Endothelial cell of umbilical vein (primary cell): ENCODE measurements at regions of chr3 and their contacts with region 1.

Region 1: GRCh38 chr3:46423588-46423987 is 16.5 kb downstream of the CCRL2 start:
- DNase-seq: no peak
- H3K4me3 ChIP-seq: no peak overlapping the region
- H3K27ac ChIP-seq: no peak overlapping the region
- H3K4me1 ChIP-seq: no peaks in the 10 kb centered on the region
- H3K27me3 ChIP-seq: peaks cover 0 to 2% of the 10 kb centered on the region in 2 experiments
- CTCF ChIP-seq: no peak
- POLR2A ChIP-seq: no peak

Region 2: GRCh38 chr3:45938864-45939263 is 484.7 kb before region 1 on chr3:
- CTCF ChIA-PET with region 1: interaction called, 19 read pairs
- POLR2A ChIA-PET with region 1: no interaction called
- dilution Hi-C with region 1: no loop called
- intact Hi-C with region 1: loop called (anchors 1 kb)
- DNase-seq: peak; percentile 86
- H3K4me3 ChIP-seq: no peak overlapping the region
- H3K27ac ChIP-seq: no peak overlapping the region
- H3K4me1 ChIP-seq: no peaks in the 10 kb centered on the region
- H3K27me3 ChIP-seq: no peaks in the 10 kb centered on the region
- CTCF ChIP-seq: peak; percentile 90 to 93
- POLR2A ChIP-seq: no peak

Region 3: GRCh38 chr3:46214751-46215352 is 208.7 kb before region 1 on chr3:
- CTCF ChIA-PET with region 1: interaction called, 9 read pairs
- POLR2A ChIA-PET with region 1: no interaction called
- dilution Hi-C with region 1: no loop called
- intact Hi-C with region 1: loop called (anchors 10 kb)
- DNase-seq: no peak
- H3K4me3 ChIP-seq: no peak overlapping the region
- H3K27ac ChIP-seq: no peak overlapping the region
- H3K4me1 ChIP-seq: no peaks in the 10 kb centered on the region
- H3K27me3 ChIP-seq: no peaks in the 10 kb centered on the region
- CTCF ChIP-seq: peak in 1 of 2 donors; percentile 15
- POLR2A ChIP-seq: no peak

Region 4: DNA sequence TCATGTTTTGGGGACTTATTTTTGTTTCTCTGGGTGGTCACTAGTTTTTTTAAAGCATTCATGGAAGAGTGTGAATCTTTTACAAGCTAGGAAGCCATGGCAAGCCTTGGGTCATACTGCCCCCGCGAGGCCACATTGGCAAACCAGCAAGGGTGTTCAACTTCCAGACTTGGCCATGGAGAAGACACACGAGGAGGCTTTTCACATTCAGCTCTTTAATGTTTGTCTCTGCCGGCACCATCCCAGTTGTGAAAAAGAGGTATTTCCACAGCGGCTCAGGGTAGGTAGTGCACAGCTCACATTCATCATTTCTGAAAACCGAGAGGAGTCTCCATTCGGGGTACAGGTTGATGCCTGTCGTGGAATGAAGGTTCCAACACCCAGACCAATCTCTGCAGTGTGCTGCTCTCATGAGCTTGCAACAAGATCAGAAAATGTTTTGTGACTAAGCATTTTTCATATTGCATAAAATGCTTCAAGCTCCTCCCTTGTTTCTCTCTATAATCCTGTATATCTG is 45.1 kb before region 1 on chr3:
- CTCF ChIA-PET with region 1: interaction called, 39 read pairs
- POLR2A ChIA-PET with region 1: no interaction called
- dilution Hi-C with region 1: no loop called
- intact Hi-C with region 1: loop called (anchors 2 kb)
- DNase-seq: peak; percentile 56
- H3K4me3 ChIP-seq: no peak overlapping the region
- H3K27ac ChIP-seq: no peak overlapping the region
- H3K4me1 ChIP-seq: no peaks in the 10 kb centered on the region
- H3K27me3 ChIP-seq: peaks cover 8 to 13% of the 10 kb centered on the region in 2 experiments
- CTCF ChIP-seq: peak; percentile 76 to 82
- POLR2A ChIP-seq: no peak

Region 5: GRCh38 chr3:46406788-46407611 is 16.6 kb before region 1 on chr3 and contains the starts of genes CCR5AS and CCRL2:
- CTCF ChIA-PET with region 1: interaction called, 50 read pairs
- POLR2A ChIA-PET with region 1: no interaction called
- dilution Hi-C with region 1: no loop called
- intact Hi-C with region 1: no loop called
- DNase-seq: peak; percentile 86
- H3K4me3 ChIP-seq: peak within 1 kb of the TSS; percentile 19 to 67 (median 23)
- H3K27ac ChIP-seq: peak within 1 kb of the TSS; percentile 63
- H3K4me1 ChIP-seq: peaks cover 41% of the 10 kb centered on the region
- H3K27me3 ChIP-seq: no peaks in the 10 kb centered on the region
- CTCF ChIP-seq: no peak
- POLR2A ChIP-seq: peak; percentile 35
- total RNA-seq, gene CCRL2: 3.9 and 6.4 TPM in 2 replicates

Region 6: DNA sequence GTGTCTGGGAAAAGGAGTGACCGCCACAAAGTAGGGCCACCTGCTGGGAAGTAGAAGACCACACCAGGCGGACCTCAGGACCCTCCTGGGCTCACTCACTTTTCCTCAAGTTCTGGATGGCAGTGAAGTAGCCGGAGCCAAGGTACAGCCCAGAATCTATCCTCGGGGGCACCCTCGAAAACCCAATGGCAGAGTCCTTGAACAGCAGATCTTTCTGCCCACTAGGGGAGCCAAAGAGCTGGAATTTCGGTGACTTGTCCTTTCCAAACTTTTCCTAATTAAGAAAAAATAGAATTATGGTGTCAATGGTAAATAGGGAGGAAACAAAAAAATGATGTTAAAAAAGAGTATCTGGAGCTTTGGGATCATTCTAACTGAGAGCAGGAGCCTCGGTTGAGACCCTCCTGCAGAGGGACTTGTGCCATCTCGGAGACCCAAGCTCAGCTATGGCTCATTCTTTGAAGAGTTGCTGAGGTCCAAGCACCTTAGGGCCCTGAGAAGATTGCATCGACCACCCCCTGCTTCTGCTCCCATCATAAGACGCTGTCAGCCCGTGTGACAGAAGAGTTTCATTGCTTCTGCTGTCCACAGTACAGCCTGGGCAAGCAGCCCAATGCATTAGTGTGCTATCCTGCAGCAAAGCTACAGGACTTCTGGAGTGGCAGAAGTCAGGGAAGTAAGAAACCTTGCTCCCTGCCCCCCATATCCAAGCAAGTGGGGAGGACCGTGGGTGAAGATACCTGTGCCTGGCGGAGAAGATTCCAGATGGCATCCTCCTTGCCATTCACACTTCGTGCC is 26.4 kb after region 1 on chr3:
- CTCF ChIA-PET with region 1: interaction called, 12 read pairs
- POLR2A ChIA-PET with region 1: no interaction called
- dilution Hi-C with region 1: no loop called
- intact Hi-C with region 1: no loop called
- DNase-seq: no peak
- H3K4me3 ChIP-seq: no peak overlapping the region
- H3K27ac ChIP-seq: no peak overlapping the region
- H3K4me1 ChIP-seq: no peaks in the 10 kb centered on the region
- H3K27me3 ChIP-seq: peaks cover 0 to 8% of the 10 kb centered on the region in 2 experiments
- CTCF ChIP-seq: peak; percentile 62 to 65
- POLR2A ChIP-seq: no peak